Endothelial cell of umbilical vein (primary cell): ENCODE measurements at regions of chr3 and their contacts with region 1.

Region 1: DNA sequence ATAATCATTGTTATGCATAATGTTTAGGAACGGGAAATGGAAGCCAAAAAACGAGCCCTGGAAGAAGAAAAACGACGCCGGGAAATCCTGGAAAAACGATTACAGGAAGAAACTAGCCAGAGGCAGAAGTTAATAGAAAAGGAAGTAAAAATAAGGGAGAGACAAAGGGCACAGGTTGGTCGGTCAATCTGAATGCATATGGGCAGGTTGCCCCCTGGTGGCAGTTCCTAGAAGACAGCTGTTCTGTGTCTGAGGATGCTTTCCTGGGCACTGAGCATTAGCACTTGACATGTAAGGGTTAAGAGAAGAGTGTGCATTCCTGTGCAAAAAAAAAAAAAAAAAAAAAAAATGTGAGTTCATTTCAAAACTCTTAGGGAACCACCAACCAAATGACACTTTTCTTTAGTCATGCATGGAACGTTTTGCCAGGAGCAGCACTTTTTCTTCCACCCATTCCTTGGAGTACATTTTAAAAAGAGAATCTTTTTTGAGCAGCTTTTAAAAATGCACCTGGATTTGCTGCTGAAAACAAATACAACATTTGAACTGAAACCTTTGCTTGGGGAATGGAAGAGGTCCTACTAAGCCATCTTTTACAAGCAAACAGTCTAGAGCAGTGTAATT is 11.1 kb upstream of the ABHD10 start:
- DNase-seq: peak; percentile 84
- H3K4me3 ChIP-seq: no peak overlapping the region
- H3K27ac ChIP-seq: peak overlapping the region; percentile 88
- H3K4me1 ChIP-seq: peaks cover 26% of the 10 kb centered on the region
- H3K27me3 ChIP-seq: no peaks in the 10 kb centered on the region
- CTCF ChIP-seq: peak; percentile 78 to 87
- POLR2A ChIP-seq: no peak

Region 2: DNA sequence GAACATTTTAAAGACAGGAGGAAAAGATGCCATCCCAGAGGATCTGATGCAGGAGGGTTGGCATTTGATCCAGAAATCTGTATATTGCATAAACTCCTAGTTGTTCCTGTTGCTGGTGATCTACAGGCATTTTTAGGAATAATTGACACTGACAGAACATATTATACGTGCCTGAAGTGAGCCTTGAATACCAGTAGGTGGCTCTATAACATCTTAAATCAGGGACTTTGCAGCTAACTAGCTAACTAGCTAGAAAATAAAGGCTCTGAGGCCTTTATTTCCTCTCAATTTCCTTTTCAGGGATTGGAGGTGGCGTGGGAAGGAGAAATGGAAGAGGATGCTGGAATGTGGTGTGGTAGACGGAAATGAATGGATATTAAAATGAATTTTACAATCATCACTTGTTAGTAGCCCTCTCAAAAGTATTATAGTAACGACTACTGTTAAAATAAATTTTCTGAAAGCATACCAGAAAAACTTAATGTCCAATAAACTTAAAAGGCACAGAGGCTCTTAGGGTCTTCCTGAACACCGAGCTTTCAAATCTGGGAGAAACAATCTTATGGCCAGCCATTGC is 298.8 kb before region 1 on chr3:
- CTCF ChIA-PET with region 1: interaction called, 18 read pairs
- POLR2A ChIA-PET with region 1: no interaction called
- dilution Hi-C with region 1: no loop called
- intact Hi-C with region 1: loop called (anchors 1 kb)
- DNase-seq: peak; percentile 63
- H3K4me3 ChIP-seq: no peak overlapping the region
- H3K27ac ChIP-seq: peak overlapping the region; percentile 29
- H3K4me1 ChIP-seq: peaks cover 31% of the 10 kb centered on the region
- H3K27me3 ChIP-seq: no peaks in the 10 kb centered on the region
- CTCF ChIP-seq: peak; percentile 61
- POLR2A ChIP-seq: no peak

Region 3: DNA sequence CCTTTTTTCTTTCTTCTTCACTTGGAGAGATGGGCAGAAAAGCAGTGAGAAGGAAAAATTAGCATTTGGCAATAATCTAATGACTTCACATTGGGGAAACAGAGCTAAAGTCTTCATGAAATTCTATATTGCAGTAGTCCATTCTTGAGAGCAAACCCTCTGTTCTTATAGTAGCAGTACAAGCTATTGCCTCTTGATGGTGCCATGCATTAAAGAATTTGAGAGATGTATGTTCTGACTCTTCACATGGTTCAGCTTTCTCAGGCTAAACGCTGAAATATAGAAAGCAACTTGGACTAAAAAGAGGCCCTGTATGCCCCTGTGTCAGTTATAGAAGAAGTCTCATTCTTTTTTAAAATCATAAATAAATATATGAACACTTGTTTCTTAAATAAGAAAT is 72.7 kb before region 1 on chr3:
- CTCF ChIA-PET with region 1: interaction called, 239 read pairs
- POLR2A ChIA-PET with region 1: interaction called, 4 read pairs
- dilution Hi-C with region 1: no loop called
- intact Hi-C with region 1: loop called (anchors 1 kb)
- DNase-seq: peak; percentile 84
- H3K4me3 ChIP-seq: no peak overlapping the region
- H3K27ac ChIP-seq: no peak overlapping the region
- H3K4me1 ChIP-seq: peaks cover 9% of the 10 kb centered on the region
- H3K27me3 ChIP-seq: no peaks in the 10 kb centered on the region
- CTCF ChIP-seq: peak; percentile 55 to 57
- POLR2A ChIP-seq: no peak

Region 4: DNA sequence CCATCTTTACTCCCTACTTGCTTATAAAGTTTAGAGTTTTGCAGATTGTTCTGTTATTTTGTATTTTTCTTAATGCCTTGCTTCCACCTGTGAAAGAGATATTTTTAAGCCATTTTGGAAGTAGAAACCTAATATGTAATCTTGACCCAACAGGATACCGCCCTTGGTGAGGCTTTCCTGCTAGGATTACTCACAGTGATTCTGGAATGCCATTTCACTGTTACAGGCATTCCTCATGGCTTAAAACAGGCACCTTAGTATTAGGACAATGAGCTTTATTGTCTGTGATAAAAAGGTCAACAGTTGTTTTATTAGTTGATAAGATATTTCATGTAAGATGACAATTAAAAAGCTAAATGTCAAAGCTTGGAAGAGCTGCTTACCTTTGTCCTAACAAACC is 50.5 kb before region 1 on chr3:
- CTCF ChIA-PET with region 1: interaction called, 21 read pairs
- POLR2A ChIA-PET with region 1: no interaction called
- dilution Hi-C with region 1: no loop called
- intact Hi-C with region 1: loop called (anchors 1 kb)
- DNase-seq: peak; percentile 88
- H3K4me3 ChIP-seq: peak overlapping the region in 1 of 3 experiments; percentile 17
- H3K27ac ChIP-seq: peak overlapping the region; percentile 91
- H3K4me1 ChIP-seq: peaks cover 35% of the 10 kb centered on the region
- H3K27me3 ChIP-seq: no peaks in the 10 kb centered on the region
- CTCF ChIP-seq: no peak
- POLR2A ChIP-seq: peak; percentile 25

Region 5: GRCh38 chr3:111936191-111936841 is 31.4 kb before region 1 on chr3:
- CTCF ChIA-PET with region 1: interaction called, 19 read pairs
- POLR2A ChIA-PET with region 1: no interaction called
- dilution Hi-C with region 1: no loop called
- intact Hi-C with region 1: loop called (anchors 1 kb)
- DNase-seq: peak; percentile 84
- H3K4me3 ChIP-seq: peak overlapping the region in 2 of 3 experiments; percentile 15 to 28
- H3K27ac ChIP-seq: peak overlapping the region; percentile 99
- H3K4me1 ChIP-seq: peaks cover 70% of the 10 kb centered on the region
- H3K27me3 ChIP-seq: no peaks in the 10 kb centered on the region
- CTCF ChIP-seq: no peak
- POLR2A ChIP-seq: no peak

Region 6: GRCh38 chr3:111956995-111957734 is 10.6 kb before region 1 on chr3:
- CTCF ChIA-PET with region 1: interaction called, 20 read pairs
- POLR2A ChIA-PET with region 1: interaction called, 4 read pairs
- dilution Hi-C with region 1: no loop called
- intact Hi-C with region 1: loop called (anchors 1 kb)
- DNase-seq: peak; percentile 91
- H3K4me3 ChIP-seq: no peak overlapping the region
- H3K27ac ChIP-seq: peak overlapping the region; percentile 57
- H3K4me1 ChIP-seq: peaks cover 28% of the 10 kb centered on the region
- H3K27me3 ChIP-seq: no peaks in the 10 kb centered on the region
- CTCF ChIP-seq: no peak
- POLR2A ChIP-seq: no peak

Region 7: GRCh38 chr3:111989061-111989678 is 21.4 kb after region 1 on chr3:
- CTCF ChIA-PET with region 1: interaction called, 12 read pairs
- POLR2A ChIA-PET with region 1: no interaction called
- dilution Hi-C with region 1: no loop called
- intact Hi-C with region 1: no loop called
- DNase-seq: peak; percentile 72
- H3K4me3 ChIP-seq: no peak overlapping the region
- H3K27ac ChIP-seq: no peak overlapping the region
- H3K4me1 ChIP-seq: no peaks in the 10 kb centered on the region
- H3K27me3 ChIP-seq: no peaks in the 10 kb centered on the region
- CTCF ChIP-seq: peak; percentile 55 to 60
- POLR2A ChIP-seq: no peak

Region 8: GRCh38 chr3:112027826-112028225 is 60.1 kb after region 1 on chr3:
- CTCF ChIA-PET with region 1: no interaction called
- POLR2A ChIA-PET with region 1: no interaction called
- dilution Hi-C with region 1: no loop called
- intact Hi-C with region 1: no loop called
- DNase-seq: no peak
- H3K4me3 ChIP-seq: no peak overlapping the region
- H3K27ac ChIP-seq: no peak overlapping the region
- H3K4me1 ChIP-seq: no peaks in the 10 kb centered on the region
- H3K27me3 ChIP-seq: peaks cover 0 to 2% of the 10 kb centered on the region in 2 experiments
- CTCF ChIP-seq: no peak
- POLR2A ChIP-seq: no peak